Activated T-helper 1 cell treated with anti-CD3 and anti-CD28 coated beads, Interleukin-12 subunit alpha, Interleukin-12 subunit beta, Interleukin-2, Interleukin-4 antibody, amounts not matched to agents 30 ng/mL and 10 ng/mL and 1 ng/mL, durations not matched to agents 14 hours and 24 hours and 36 hours (primary cell): ENCODE measurements at regions of chr20 and their contacts with region 1.

Region 1: GRCh38 chr20:13221673-13222318 is 722 bp downstream of the ISM1 start:
- DNase-seq: peak; percentile 59
- H3K4me3 Mint-ChIP-seq: peak overlapping the region; percentile 79
- H3K27ac Mint-ChIP-seq: peak overlapping the region; percentile 53
- H3K4me1 Mint-ChIP-seq: peaks cover 15% of the 10 kb centered on the region
- H3K27me3 Mint-ChIP-seq: peaks cover 62% of the 10 kb centered on the region

Region 2: DNA sequence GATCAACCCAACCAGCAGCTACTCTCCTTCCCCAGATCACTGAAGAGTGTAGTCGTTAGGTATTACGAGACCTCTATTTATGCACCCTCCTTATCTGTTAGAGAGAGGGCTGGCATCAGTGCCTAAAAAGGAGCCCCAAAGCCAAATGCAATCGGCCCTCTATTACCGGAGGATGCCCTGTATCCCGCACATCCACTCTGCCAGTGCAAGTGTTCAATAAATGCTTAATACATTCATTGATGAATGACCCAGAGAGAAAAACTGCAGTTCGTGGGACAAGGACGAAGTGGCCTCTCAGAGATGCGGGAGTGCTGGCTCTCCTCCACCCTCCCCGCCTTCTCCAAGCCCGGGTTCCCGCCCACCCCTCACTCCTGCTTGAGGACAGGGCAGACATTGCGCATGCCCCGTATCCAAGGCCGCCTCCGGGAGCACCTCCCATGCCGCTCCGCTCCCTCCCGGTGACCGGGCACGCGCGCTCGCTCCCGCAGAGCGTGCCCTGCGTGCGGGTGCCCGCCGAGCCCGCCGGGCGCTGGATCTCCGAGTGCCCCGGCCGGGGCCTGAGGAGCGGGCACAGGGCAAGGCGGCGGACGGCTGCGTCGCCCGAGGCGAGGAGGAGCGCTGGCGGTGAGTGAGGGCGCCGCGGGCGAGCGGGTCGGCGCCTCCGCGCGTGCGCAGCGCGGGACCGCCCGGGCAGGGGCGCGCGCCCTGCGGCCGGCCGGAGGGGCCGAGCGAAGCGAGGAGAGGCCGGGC is 1331.3 kb before region 1 on chr20:
- intact Hi-C with region 1: loop called (anchors 10 kb)
- DNase-seq: peak; percentile 55
- H3K4me3 Mint-ChIP-seq: peak overlapping the region; percentile 82
- H3K27ac Mint-ChIP-seq: peak overlapping the region; percentile 1
- H3K4me1 Mint-ChIP-seq: peaks cover 25% of the 10 kb centered on the region
- H3K27me3 Mint-ChIP-seq: peaks cover 19% of the 10 kb centered on the region

Region 3: DNA sequence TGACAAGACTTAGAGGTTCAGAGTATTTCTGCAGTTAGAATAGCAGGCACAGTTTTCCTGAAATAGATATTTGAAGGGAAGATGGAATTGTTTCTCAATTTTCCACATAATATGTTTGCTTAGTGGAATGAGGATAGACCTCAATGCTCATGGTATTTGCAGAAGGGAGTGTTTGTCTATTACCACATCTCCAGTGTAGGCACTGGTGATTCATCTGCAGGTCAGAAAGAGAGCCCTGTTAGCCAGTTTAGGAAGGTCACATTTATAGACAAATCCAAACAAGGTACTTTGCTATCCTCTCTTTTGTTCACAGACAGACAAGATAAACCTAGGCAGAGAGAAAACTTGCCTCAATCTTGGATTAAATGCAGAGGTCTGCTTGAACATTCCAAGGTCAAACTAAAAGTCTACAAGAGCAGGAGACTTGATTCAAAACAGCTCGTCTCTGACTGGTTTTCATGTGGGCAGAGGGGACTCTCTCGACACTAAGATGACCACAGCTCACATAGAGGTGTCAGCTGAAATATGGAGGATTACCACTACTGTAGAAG is 22.1 kb after region 1 on chr20:
- intact Hi-C with region 1: loop called (anchors 1 kb)
- DNase-seq: no peak
- H3K4me3 Mint-ChIP-seq: no peak overlapping the region
- H3K27ac Mint-ChIP-seq: no peak overlapping the region
- H3K4me1 Mint-ChIP-seq: peaks cover 29% of the 10 kb centered on the region
- H3K27me3 Mint-ChIP-seq: peaks cover 2% of the 10 kb centered on the region

Region 4: GRCh38 chr20:13261460-13262301 is 39.9 kb after region 1 on chr20:
- intact Hi-C with region 1: loop called (anchors 1 kb)
- DNase-seq: peak; percentile 20
- H3K4me3 Mint-ChIP-seq: no peak overlapping the region
- H3K27ac Mint-ChIP-seq: no peak overlapping the region
- H3K4me1 Mint-ChIP-seq: no peaks in the 10 kb centered on the region
- H3K27me3 Mint-ChIP-seq: no peaks in the 10 kb centered on the region

Region 5: DNA sequence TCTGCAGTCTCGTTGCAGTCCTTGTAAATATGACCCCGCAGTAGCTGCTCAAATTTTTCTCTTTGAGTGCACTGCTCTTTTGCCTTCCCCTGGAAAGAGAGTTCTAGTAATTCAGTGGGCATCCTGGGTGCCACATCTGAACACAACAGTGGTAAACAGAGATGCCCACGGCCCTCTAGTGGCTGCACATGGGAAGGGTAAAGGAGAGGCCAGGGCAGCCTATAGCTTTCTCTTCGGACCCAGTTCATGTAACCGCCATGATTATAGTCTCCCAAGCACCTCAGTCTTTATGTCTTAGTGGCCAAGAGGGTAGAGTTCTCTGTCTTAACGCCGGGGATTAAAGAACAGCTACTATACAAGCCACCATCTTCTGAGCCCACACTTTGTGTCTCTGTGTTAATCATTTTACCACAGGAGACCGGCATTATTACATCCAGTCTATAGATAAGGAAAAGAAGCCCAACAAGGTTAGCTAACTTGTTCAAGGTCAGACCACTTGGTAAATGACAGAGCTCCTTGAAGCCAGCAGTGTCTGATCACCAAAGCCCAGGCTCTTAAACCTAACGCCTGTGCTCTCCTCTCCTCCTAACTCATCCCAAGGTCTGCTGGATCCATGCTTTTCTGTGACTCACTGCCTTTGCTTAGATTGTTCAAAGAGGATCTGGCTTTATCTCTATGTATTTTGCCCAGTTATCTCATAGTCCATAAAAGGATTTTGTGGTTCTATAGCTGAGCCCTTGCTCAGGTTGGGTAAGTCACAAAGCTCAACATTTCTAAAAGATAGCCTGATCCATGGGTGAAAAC is 81.1 kb after region 1 on chr20:
- intact Hi-C with region 1: loop called (anchors 2 kb)
- DNase-seq: peak; percentile 13
- H3K4me3 Mint-ChIP-seq: no peak overlapping the region
- H3K27ac Mint-ChIP-seq: no peak overlapping the region
- H3K4me1 Mint-ChIP-seq: no peaks in the 10 kb centered on the region
- H3K27me3 Mint-ChIP-seq: no peaks in the 10 kb centered on the region

Region 6: GRCh38 chr20:13638496-13639222 is 416.9 kb after region 1 on chr20 and contains the start of gene TASP1:
- intact Hi-C with region 1: loop called (anchors 5 kb)
- DNase-seq: peak; percentile 91
- H3K4me3 Mint-ChIP-seq: peak within 1 kb of the TSS; percentile 97
- H3K27ac Mint-ChIP-seq: peak within 1 kb of the TSS; percentile 71
- H3K4me1 Mint-ChIP-seq: peaks cover 30% of the 10 kb centered on the region
- H3K27me3 Mint-ChIP-seq: peaks cover 11% of the 10 kb centered on the region
- total RNA-seq, gene TASP1: 13.8 and 14.8 TPM in 2 replicates

Region 7: GRCh38 chr20:13819885-13820645 is 598.3 kb after region 1 on chr20:
- intact Hi-C with region 1: loop called (anchors 10 kb)
- DNase-seq: no peak
- H3K4me3 Mint-ChIP-seq: no peak overlapping the region
- H3K27ac Mint-ChIP-seq: no peak overlapping the region
- H3K4me1 Mint-ChIP-seq: peaks cover 23% of the 10 kb centered on the region
- H3K27me3 Mint-ChIP-seq: no peaks in the 10 kb centered on the region